ENCODE measurements at regions of chr15 and their contacts with region 1.

Region 1: DNA sequence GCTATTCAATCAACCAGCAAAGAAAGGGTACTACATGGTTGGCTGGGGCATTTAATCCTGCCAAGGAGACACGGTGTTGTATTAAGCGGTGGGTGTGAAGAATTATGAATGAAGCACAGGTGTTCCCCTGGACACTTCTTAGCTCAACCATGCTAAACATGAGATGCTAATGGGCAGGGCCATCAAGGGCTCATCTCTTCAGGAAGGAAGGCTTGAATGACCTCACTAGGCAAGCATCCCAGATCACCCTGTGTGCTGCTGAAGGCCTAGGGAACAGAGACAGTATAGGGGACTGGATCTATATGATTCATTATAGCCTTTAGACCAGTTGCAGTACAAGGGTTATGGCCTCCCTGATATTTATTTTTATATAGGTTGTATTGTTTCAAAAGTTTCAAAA is 221.3 kb upstream of the SLCO3A1 start:
- DNase-seq: no peak
- ATAC-seq: no peak
- H3K4me3 ChIP-seq: no peak overlapping the region
- H3K27ac ChIP-seq: no peak overlapping the region
- H3K4me1 ChIP-seq: no peaks in the 10 kb centered on the region
- H3K27me3 ChIP-seq: no peaks in the 10 kb centered on the region

Region 2: DNA sequence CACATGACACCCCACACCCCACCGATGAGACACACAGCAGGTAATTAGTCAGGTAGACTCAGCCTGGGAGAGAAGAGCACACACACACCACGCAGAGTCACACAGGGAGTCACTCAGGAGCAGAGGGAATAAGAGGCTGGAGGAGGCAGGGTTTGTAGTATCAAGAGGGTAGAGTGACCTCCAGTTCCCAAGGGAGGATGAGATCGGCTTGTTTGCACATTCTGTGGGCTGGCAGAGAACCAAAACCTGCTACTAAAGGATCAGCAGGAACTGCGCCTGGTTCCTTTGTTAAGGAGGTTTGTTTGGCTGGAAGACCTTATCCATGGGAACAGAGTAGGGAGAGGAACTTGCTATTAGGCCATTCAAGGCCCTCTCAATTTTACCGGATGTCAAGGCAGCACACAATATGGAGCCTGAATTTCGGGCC is 60.0 kb before region 1 on chr15:
- intact Hi-C with region 1: loop called in 1 of 2 experiments (anchors 10 kb)
- DNase-seq: no peak
- ATAC-seq: no peak
- H3K4me3 ChIP-seq: no peak overlapping the region
- H3K27ac ChIP-seq: no peak overlapping the region
- H3K4me1 ChIP-seq: no peaks in the 10 kb centered on the region
- H3K27me3 ChIP-seq: no peaks in the 10 kb centered on the region

Region 3: DNA sequence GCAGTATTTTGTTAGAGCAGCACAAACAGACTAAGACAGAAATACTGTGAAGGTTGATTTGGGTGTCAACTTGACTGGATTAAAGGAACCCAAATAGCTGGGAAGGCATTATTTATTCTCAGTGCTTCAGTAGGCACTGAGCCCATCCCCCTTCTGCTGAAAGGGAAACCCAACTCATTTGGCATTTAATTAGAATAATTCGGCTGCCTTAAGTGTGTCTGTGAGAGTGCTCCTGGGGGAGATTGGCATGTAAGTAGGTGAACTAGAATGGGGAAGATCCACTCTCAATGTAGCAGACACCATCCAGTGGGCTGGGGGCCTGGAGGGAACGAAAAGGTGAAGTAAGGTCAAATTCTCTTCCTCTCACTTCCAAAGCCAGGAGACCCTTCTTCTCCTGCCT is 200.9 kb after region 1 on chr15:
- intact Hi-C with region 1: loop called in 1 of 2 experiments (anchors 5 kb)
- DNase-seq: no peak
- ATAC-seq: no peak
- H3K4me3 ChIP-seq: no peak overlapping the region
- H3K27ac ChIP-seq: no peak overlapping the region
- H3K4me1 ChIP-seq: no peaks in the 10 kb centered on the region
- H3K27me3 ChIP-seq: no peaks in the 10 kb centered on the region

Measured in aorta (tissue), 5 donors.